ENCODE measurements at regions of chr16 and their contacts with region 1.

Region 1: DNA sequence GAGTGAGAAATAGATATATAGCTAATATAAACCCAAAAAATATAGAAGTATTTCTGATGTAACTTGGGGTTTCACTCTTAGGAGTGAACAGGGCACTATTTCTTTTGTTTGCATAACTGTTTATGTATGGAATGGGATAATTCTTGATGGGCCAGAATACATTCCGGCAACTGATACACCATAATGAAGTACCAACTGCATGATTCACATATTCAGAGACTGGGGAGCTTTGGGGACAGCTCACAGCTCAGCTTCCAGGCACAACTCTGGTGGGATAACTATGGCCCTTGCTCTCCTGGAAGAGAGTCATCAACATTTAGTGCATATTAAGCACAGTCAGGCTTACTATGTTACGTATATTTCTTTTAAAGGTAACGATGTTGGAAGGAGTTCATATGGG is 42.1 kb upstream of the ADCY7 start:
- DNase-seq: no peak
- H3K4me3 Mint-ChIP-seq: no peak overlapping the region
- H3K27ac Mint-ChIP-seq: no peak overlapping the region
- H3K4me1 Mint-ChIP-seq: peaks cover 13% of the 10 kb centered on the region
- H3K27me3 Mint-ChIP-seq: no peaks in the 10 kb centered on the region

Region 2: GRCh38 chr16:50259334-50260205 is 35.3 kb after region 1 on chr16:
- intact Hi-C with region 1: no loop called
- DNase-seq: no peak
- H3K4me3 Mint-ChIP-seq: no peak overlapping the region
- H3K27ac Mint-ChIP-seq: no peak overlapping the region
- H3K4me1 Mint-ChIP-seq: peaks cover 19% of the 10 kb centered on the region
- H3K27me3 Mint-ChIP-seq: peaks cover 30% of the 10 kb centered on the region

Region 3: GRCh38 chr16:50791522-50791921 is 567.2 kb after region 1 on chr16:
- intact Hi-C with region 1: loop called (anchors 5 kb)
- DNase-seq: no peak
- H3K4me3 Mint-ChIP-seq: no peak overlapping the region
- H3K27ac Mint-ChIP-seq: no peak overlapping the region
- H3K4me1 Mint-ChIP-seq: peaks cover 17% of the 10 kb centered on the region
- H3K27me3 Mint-ChIP-seq: no peaks in the 10 kb centered on the region